ENCODE measurements at regions of chr16 and their contacts with region 1.

Region 1: DNA sequence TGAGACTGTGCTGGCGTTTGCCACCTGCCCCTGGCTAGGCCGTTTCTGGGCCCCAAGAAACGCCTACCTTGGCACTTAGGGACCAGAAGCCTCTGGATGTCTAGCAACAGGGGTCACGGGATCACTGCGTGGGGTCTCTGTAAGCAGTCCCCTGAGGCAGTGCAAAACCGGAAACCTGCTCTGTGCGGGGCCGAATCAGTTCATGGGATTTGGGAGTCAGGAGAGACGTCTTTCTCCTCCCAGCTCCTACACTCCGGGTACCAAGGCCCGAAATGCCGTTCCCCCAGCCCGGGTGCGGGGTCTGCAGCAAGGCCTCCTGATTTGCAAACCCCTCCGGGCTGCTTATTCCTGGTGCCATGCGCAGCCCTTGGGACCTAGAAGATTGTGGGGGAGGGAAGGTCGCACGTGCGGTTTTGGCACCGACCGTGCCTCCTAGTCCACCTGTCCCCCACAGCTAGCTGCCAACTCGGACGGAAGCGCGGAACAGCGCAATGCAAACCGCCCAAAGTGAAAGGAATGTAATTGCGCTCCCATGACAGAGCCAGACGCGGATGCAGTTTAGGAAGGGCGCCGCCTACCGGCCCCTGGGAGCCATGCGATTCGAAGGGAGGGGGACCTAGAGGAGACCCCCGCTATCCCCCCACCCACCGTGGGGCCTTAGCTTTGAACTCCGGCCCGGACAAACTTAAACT is 6.5 kb downstream of the IRX5 start:
- DNase-seq: peak; percentile 38 to 52
- ATAC-seq: peak; percentile 30 to 73 (median 58)
- H3K4me3 ChIP-seq: peak overlapping the region; percentile 17 to 90 (median 68)
- H3K27ac ChIP-seq: peak overlapping the region; percentile 14 to 96 (median 64)
- H3K4me1 ChIP-seq: peaks cover 3 to 46% (median 36%) of the 10 kb centered on the region in 9 donors
- H3K27me3 ChIP-seq: peaks cover 0 to 100% (median 88%) of the 10 kb centered on the region in 7 donors
- CTCF ChIP-seq: peak; percentile 36 to 73 (median 70)

Region 2: DNA sequence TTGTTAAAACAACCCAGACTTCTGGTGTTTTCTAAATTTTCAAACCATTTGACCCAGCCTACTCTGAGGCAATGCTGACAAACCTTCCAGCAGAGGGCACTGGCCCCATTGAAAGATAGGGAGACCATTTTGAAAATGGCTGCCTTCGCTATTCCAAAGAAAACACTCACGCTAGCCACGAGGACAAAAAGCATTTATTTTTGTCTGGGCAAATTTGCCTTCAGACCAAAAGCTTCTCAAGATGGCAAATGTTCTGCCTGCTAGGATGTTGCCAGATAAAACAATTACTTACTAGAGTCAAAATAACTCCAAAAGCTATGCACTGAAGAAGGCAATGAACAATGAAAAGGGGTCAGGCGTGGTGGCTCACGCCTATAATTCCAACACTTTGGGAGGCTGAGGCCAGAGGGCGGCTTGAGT is 303.2 kb before region 1 on chr16:
- intact Hi-C with region 1: loop called in 2 of 10 experiments (anchors 10 kb)
- DNase-seq: peak in 1 of 2 donors; percentile 27
- ATAC-seq: peak in 4 of 8 donors; percentile 33 to 68 (median 50)
- H3K4me3 ChIP-seq: no peak overlapping the region
- H3K27ac ChIP-seq: no peak overlapping the region
- H3K4me1 ChIP-seq: peaks cover 0 to 7% (median 0%) of the 10 kb centered on the region in 9 donors
- H3K27me3 ChIP-seq: no peaks in the 10 kb centered on the region
- CTCF ChIP-seq: peak in 8 of 9 donors; percentile 21 to 68 (median 56)

Region 3: GRCh38 chr16:55091213-55091870 is 154.2 kb after region 1 on chr16:
- intact Hi-C with region 1: no loop called
- DNase-seq: no peak
- ATAC-seq: peak in 2 of 8 donors; percentile 19 to 53
- H3K4me3 ChIP-seq: no peak overlapping the region
- H3K27ac ChIP-seq: no peak overlapping the region
- H3K4me1 ChIP-seq: no peaks in the 10 kb centered on the region
- H3K27me3 ChIP-seq: peaks cover 0 to 8% (median 0%) of the 10 kb centered on the region in 7 donors
- CTCF ChIP-seq: no peak